CD8-positive, alpha-beta T cell (primary cell): ENCODE measurements at regions of chr16 and their contacts with region 1.

Region 1: GRCh38 chr16:75764154-75764768 is 38.0 kb upstream of the CPHXL start:
- DNase-seq: peak; percentile 24 to 83 (median 53)
- ATAC-seq: peak; percentile 99
- H3K4me3 ChIP-seq: no peak overlapping the region
- H3K4me3 Mint-ChIP-seq: no peak overlapping the region
- H3K27ac ChIP-seq: no peak overlapping the region
- H3K27ac Mint-ChIP-seq: no peak overlapping the region
- H3K4me1 ChIP-seq: no peaks in the 10 kb centered on the region
- H3K4me1 Mint-ChIP-seq: no peaks in the 10 kb centered on the region
- H3K27me3 ChIP-seq: no peaks in the 10 kb centered on the region
- H3K27me3 Mint-ChIP-seq: peaks cover 2% of the 10 kb centered on the region
- CTCF ChIP-seq: peak; percentile 83

Region 2: DNA sequence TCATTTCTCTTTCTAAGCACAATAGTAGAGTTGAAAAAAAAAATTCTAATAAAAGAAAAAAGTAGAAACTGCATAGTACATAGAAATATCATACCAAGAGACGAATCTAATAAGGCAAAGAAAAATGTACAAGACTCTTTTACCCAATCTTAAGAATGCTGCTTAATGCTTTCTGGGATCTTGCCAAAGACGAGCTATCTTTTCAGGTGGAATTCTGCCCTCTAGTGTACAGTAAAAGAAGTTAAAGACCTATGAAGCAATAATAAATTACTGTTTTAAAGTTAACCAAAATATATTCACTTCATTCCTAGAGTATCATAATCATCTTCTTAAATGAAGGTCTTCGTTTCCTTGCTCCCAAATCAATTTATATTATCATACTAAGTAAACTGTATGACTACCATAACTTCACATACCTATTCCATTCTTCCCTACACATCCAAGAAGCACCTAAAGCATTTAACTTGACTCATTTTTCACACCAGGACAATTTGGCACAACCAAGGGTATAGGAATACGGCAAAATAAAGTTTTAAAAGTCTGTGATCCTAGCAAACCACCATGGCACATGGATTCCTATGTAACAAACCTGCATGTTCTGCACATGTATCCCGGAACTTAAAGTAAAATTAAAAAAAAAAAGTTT is 378.6 kb before region 1 on chr16:
- CTCF ChIA-PET with region 1: interaction called, 4 read pairs
- POLR2A ChIA-PET with region 1: no interaction called
- intact Hi-C with region 1: loop called in 1 of 2 experiments (anchors 5 kb)
- DNase-seq: peak in 3 of 9 experiments; percentile 5 to 79 (median 70)
- ATAC-seq: peak; percentile 26
- H3K4me3 ChIP-seq: no peak overlapping the region
- H3K4me3 Mint-ChIP-seq: no peak overlapping the region
- H3K27ac ChIP-seq: no peak overlapping the region
- H3K27ac Mint-ChIP-seq: no peak overlapping the region
- H3K4me1 ChIP-seq: peaks cover 4% of the 10 kb centered on the region
- H3K4me1 Mint-ChIP-seq: peaks cover 16% of the 10 kb centered on the region
- H3K27me3 ChIP-seq: no peaks in the 10 kb centered on the region
- H3K27me3 Mint-ChIP-seq: no peaks in the 10 kb centered on the region
- CTCF ChIP-seq: peak; percentile 75

Region 3: DNA sequence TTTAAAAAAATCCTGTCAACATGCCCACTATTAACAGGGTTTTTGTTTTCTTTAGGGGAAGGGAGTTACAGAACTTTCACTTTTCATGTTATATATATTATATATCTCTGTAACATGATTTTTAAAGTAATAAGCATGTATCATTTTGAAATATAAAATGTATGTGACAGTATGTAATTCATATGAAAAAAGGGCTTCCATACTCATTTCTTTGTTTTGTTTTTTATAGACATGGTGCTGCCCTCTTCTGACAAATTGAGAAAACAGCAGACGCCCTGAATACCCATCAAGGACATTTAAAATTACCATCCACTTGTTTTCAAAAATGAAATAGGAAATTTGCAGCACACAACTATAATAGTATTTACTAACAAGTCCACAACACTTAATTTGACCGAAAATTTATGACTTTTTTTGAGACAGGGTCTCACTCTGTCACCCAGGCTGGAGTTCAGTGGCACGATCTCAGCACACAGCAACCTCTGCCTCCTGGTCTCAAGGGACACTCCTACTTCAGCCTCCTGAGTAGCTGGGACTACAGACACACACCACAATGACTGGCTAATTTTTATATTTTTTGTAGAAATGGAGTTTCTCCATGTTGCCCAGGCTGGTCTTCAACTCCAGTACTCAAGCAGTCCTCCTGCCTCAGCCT is 361.3 kb before region 1 on chr16:
- CTCF ChIA-PET with region 1: no interaction called
- POLR2A ChIA-PET with region 1: no interaction called
- intact Hi-C with region 1: loop called in 1 of 2 experiments (anchors 5 kb)
- DNase-seq: peak in 2 of 9 experiments; percentile 41 to 50
- ATAC-seq: peak; percentile 44
- H3K4me3 ChIP-seq: no peak overlapping the region
- H3K4me3 Mint-ChIP-seq: no peak overlapping the region
- H3K27ac ChIP-seq: no peak overlapping the region
- H3K27ac Mint-ChIP-seq: no peak overlapping the region
- H3K4me1 ChIP-seq: no peaks in the 10 kb centered on the region
- H3K4me1 Mint-ChIP-seq: no peaks in the 10 kb centered on the region
- H3K27me3 ChIP-seq: no peaks in the 10 kb centered on the region
- H3K27me3 Mint-ChIP-seq: no peaks in the 10 kb centered on the region
- CTCF ChIP-seq: peak; percentile 61

Region 4: GRCh38 chr16:75471723-75472633 is 292.3 kb before region 1 on chr16:
- CTCF ChIA-PET with region 1: interaction called, 55 read pairs
- POLR2A ChIA-PET with region 1: no interaction called
- intact Hi-C with region 1: loop called (anchors 1 kb)
- DNase-seq: peak in 7 of 9 experiments; percentile 17 to 71 (median 47)
- ATAC-seq: peak; percentile 83
- H3K4me3 ChIP-seq: no peak overlapping the region
- H3K4me3 Mint-ChIP-seq: no peak overlapping the region
- H3K27ac ChIP-seq: no peak overlapping the region
- H3K27ac Mint-ChIP-seq: no peak overlapping the region
- H3K4me1 ChIP-seq: no peaks in the 10 kb centered on the region
- H3K4me1 Mint-ChIP-seq: no peaks in the 10 kb centered on the region
- H3K27me3 ChIP-seq: no peaks in the 10 kb centered on the region
- H3K27me3 Mint-ChIP-seq: peaks cover 6% of the 10 kb centered on the region
- CTCF ChIP-seq: peak; percentile 54